ENCODE measurements at regions of chr4 and their contacts with region 1.

Region 1: DNA sequence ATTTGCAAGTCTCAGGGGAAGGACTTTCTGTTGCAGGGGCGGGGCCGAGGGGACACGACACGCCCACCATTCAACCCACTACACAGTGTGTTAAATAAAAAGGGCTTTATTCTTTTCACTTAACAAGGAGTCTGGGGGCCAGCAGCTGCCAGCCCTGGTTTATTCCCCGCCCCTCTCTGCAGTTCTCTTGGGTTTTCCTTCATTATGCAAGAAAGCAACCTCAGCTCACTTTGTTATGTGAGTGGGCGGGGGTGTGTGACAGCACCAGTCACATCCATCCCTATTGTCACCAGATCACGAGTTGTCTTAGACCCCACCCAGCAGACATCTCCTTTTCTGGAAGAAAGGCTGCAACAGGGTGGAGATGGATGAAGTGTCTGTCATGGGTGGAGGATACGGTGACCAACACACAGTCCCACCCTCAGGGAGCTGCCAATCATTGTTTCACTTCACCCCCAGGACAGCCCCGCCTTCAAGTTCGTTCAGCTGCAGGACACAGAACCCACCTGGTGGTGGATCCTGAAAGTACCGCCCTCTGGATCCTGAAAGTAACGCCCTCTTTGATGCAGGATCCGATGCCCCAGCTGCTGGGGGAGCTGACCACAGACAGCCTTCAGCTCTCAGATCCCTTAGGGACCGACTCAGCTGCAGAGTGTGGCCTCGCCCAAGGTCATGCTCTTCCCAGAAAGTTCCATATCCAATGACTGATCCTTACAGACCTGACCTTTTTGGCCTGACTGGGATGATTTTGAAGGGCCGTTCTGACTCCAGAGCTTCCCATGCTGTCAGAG is 79.6 kb downstream of the SMIM20 start:
- DNase-seq: no peak
- H3K4me3 ChIP-seq: no peak overlapping the region
- H3K27me3 ChIP-seq: no peaks in the 10 kb centered on the region
- CTCF ChIP-seq: no peak

Region 2: GRCh38 chr4:25950461-25951389 is 42.9 kb before region 1 on chr4:
- CTCF ChIA-PET with region 1: no interaction called
- POLR2A ChIA-PET with region 1: no interaction called
- DNase-seq: no peak
- H3K4me3 ChIP-seq: no peak overlapping the region
- H3K27me3 ChIP-seq: peaks cover 13% of the 10 kb centered on the region
- CTCF ChIP-seq: no peak

Region 3: GRCh38 chr4:25966171-25966570 is 27.4 kb before region 1 on chr4:
- CTCF ChIA-PET with region 1: interaction called, 16 read pairs
- POLR2A ChIA-PET with region 1: no interaction called
- DNase-seq: no peak
- H3K4me3 ChIP-seq: no peak overlapping the region
- H3K27me3 ChIP-seq: peaks cover 8% of the 10 kb centered on the region
- CTCF ChIP-seq: no peak

Region 4: GRCh38 chr4:26022346-26023202 is 29.0 kb after region 1 on chr4:
- CTCF ChIA-PET with region 1: interaction called, 24 read pairs
- POLR2A ChIA-PET with region 1: interaction called, 3 read pairs
- DNase-seq: peak; percentile 71
- H3K4me3 ChIP-seq: no peak overlapping the region
- H3K27me3 ChIP-seq: no peaks in the 10 kb centered on the region
- CTCF ChIP-seq: no peak

Region 5: DNA sequence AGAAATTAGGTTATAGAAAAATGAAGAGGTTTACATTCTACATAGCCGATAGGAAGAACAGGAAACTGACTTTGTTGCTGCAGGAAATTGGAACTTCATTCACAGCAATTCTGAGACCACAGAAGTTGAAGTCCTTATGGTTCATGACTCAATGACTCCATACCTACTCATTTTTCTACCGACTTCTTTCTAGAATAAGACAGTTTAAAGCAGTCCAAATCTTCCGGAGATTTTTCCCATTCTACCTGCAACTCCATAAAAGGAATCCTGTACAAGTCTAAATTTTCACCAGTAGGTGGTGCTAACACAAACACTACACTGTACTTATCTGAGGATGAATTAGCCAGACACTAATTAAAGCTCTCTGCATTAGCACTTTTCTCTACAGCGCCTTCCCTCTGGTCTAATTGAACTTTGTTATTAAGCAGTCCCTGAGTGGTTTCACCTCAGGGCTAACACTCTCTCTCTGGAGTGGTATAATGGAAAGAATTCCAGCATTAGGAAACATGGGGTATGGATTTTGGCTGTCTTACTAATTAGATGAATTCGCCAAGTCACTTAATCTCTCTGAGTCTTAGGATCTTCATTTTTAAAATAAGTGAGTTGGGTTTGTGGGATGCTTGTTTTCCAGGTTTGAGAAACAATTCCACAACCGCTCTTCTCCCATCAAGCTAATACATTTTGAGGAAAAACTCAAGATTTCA is 88.4 kb after region 1 on chr4:
- CTCF ChIA-PET with region 1: interaction called, 12 read pairs
- POLR2A ChIA-PET with region 1: no interaction called
- DNase-seq: no peak
- H3K4me3 ChIP-seq: no peak overlapping the region
- H3K27me3 ChIP-seq: peaks cover 29% of the 10 kb centered on the region
- CTCF ChIP-seq: peak; percentile 66

Region 6: GRCh38 chr4:26308568-26308967 is 315.0 kb after region 1 on chr4:
- CTCF ChIA-PET with region 1: no interaction called
- POLR2A ChIA-PET with region 1: no interaction called
- DNase-seq: no peak
- H3K4me3 ChIP-seq: no peak overlapping the region
- H3K27me3 ChIP-seq: no peaks in the 10 kb centered on the region
- CTCF ChIP-seq: no peak

Region 7: DNA sequence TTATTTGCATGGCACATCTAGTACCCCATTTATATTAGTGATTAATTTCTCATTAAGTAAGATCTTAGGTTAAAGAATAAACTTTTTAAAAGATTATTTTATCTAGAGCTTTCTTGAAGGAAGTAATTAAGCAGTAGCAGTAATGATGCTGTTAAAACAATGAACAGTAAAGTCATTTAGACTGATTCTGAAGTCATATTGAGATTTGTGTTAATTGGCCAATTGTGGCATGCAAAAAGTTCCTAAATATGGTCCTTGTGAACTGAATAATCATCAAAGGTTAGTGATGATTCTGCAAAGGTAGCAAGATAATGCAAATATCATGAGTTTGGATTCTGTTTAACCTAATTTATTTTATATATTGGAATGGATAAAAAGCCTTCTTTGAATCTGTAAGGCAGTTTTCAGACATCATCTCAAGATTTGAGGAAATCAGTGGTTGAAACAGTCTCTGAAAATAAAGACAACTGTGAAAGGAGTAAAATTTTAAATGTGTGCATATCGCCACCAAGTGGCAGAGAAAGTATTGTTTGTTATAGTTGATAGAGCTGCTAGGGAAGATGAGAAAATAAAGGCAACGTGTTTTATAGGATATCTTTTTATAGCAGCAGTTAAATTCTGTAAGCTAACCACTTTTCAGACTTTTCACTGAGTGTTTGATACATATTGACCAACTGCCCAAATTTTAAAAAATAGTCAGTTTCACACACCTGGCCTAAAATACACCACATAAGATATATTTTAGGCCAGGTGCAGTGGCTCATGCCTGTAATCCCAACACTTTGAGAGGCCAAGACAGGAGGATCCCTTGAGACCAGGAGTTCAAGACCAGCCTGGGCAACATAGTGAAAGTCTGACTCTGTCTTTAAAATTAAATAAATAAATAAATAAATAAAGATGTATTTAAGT is 417.0 kb after region 1 on chr4:
- CTCF ChIA-PET with region 1: interaction called, 15 read pairs
- POLR2A ChIA-PET with region 1: no interaction called
- DNase-seq: peak; percentile 15
- H3K4me3 ChIP-seq: no peak overlapping the region
- H3K27me3 ChIP-seq: no peaks in the 10 kb centered on the region
- CTCF ChIP-seq: peak; percentile 54

Region 8: GRCh38 chr4:26490111-26490959 is 496.7 kb after region 1 on chr4 and contains the start of gene CCKAR:
- CTCF ChIA-PET with region 1: no interaction called
- POLR2A ChIA-PET with region 1: no interaction called
- DNase-seq: no peak
- H3K4me3 ChIP-seq: no peak within 1 kb of the TSS
- H3K27me3 ChIP-seq: peaks cover 26% of the 10 kb centered on the region
- CTCF ChIP-seq: no peak
- polyA plus RNA-seq, gene CCKAR: 0.12 and 0.17 TPM in 2 replicates

Region 9: DNA sequence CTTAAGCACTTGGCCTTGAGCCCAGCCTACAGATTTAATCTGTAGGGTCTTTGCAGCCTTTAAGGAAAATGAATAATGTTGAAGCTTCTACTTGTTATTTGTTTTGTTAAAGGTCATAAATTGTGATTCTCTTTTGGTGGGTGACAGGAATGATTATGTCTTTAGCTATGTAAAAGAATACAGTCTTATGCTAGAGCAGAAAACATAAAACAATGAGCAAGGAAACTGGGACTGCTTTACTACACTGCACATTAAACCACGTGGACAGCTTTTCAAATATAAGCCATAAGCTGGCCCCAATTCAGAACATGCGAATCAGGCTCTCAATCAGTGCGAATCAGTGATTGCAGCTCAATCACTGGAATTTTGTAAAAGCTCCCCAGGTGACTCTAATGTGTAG is 549.4 kb after region 1 on chr4:
- CTCF ChIA-PET with region 1: no interaction called
- POLR2A ChIA-PET with region 1: no interaction called
- DNase-seq: no peak
- H3K4me3 ChIP-seq: no peak overlapping the region
- H3K27me3 ChIP-seq: no peaks in the 10 kb centered on the region
- CTCF ChIP-seq: no peak

Measured in BJ (cell line).